Activated B cell treated with CpG ODN at 0.5 μM for 24 hours (primary cell): ENCODE measurements at regions of chr9 and their contacts with region 1.

Region 1: GRCh38 chr9:122940603-122941559 is at the start of gene RABGAP1:
- DNase-seq: peak; percentile 89
- ATAC-seq: peak; percentile 98
- H3K4me3 Mint-ChIP-seq: peak within 1 kb of the TSS; percentile 93
- H3K27ac Mint-ChIP-seq: peak within 1 kb of the TSS; percentile 79
- H3K4me1 Mint-ChIP-seq: peaks cover 27% of the 10 kb centered on the region
- H3K27me3 Mint-ChIP-seq: no peaks in the 10 kb centered on the region
- CTCF ChIP-seq: no peak
- total RNA-seq, gene RABGAP1: 47.4 and 58.1 TPM in 2 replicates

Region 2: GRCh38 chr9:122923947-122924346 is 16.9 kb before region 1 on chr9:
- CTCF ChIA-PET with region 1: no interaction called
- POLR2A ChIA-PET with region 1: interaction called, 11 read pairs
- intact Hi-C with region 1: no loop called
- DNase-seq: no peak
- ATAC-seq: peak; percentile 83
- H3K4me3 Mint-ChIP-seq: no peak overlapping the region
- H3K27ac Mint-ChIP-seq: peak overlapping the region; percentile 32
- H3K4me1 Mint-ChIP-seq: peaks cover 19% of the 10 kb centered on the region
- H3K27me3 Mint-ChIP-seq: no peaks in the 10 kb centered on the region
- CTCF ChIP-seq: no peak